ENCODE measurements at regions of chr18 and their contacts with region 1.

Region 1: DNA sequence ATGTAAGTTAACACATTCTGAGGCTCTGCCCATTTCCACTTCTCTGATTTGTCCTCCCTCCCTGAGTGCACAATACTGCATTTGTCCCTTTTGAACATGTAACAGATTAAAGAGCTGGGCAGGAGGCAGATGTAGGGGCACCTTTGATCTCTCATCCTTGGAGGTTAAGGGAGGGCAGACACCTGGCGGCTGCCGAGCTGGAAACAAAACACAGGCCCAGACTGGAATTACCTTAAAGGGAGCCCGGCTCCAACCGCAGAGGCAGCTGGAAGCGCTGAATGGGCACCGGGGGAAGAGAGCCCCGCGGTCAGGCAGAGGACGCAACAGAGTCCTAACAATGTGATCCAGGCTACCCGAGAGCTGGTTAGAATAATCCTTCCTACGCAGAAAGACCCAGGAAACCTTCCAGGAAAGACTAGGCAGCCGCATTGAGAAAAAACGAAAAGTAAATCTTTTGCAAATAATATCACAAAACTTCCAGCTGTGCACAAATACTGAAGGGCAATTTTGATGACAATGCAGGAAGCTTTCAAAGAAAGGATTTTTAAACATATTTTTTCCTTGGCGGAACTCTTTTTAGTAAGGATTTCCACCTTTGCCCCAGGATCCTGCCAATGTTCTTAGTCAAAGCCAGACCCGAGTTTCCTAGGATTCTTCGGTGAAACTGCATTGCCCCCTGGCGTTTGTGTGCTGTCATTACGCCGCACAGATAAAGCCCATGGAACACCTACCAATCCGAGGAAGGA is 216.0 kb downstream of the TGIF1 start:
- DNase-seq: peak; percentile 78 to 86 (median 81)
- H3K4me3 ChIP-seq: peak overlapping the region in 3 of 7 experiments; percentile 30 to 65 (median 38)
- H3K27ac ChIP-seq: peak overlapping the region in 1 of 2 experiments; percentile 67
- H3K4me1 ChIP-seq: peaks cover 10 to 32% (median 27%) of the 10 kb centered on the region in 4 experiments
- H3K27me3 ChIP-seq: no peaks in the 10 kb centered on the region

Region 2: DNA sequence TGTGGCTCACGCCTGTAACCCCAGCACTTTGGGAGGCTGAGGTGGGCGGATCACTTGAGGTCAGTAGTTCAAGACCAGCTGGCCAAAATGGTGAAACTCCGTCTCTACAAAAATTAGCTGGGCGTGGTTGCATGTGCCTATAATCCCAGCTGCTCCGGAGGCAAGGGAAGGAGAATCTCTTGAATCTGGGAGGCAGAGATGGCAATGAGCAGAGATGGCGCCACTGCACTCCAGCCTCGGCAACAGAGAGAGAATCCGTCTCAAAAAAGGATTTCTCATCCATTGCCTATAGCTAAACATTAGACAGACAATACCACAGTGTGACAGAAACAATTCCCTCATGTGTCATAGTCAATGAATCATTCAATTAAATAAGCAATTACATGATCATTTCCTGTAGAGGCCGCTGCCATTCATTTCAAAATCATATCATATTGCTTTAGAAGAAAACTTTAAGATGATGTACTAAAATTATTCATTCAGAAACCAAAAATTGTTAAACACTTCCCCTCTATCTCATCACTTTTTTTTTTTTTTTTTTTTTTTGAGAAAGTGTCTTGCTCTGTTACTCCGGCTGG is 285.5 kb before region 1 on chr18:
- CTCF ChIA-PET with region 1: no interaction called
- POLR2A ChIA-PET with region 1: no interaction called
- DNase-seq: no peak
- H3K4me3 ChIP-seq: no peak overlapping the region
- H3K27ac ChIP-seq: no peak overlapping the region
- H3K4me1 ChIP-seq: no peaks in the 10 kb centered on the region
- H3K27me3 ChIP-seq: no peaks in the 10 kb centered on the region

Region 3: DNA sequence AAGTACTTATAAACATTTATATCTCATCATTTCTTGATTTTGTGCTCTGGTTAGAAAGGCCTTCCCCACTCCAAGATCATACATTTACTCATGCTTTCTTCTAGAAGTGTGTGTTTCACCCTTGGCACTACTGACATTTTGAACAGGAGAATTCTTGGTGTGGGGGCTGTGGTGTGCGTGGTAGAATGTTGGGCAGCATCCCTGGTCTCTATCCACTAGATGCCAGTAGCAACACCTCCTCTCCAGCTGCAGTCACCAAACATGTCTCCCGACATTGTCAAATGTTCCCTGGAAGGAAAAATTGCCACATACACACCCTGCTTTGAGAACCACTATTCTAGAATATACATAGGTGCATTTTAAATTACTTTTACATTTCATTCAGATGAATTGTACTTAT is 224.7 kb before region 1 on chr18:
- CTCF ChIA-PET with region 1: interaction called, 27 read pairs
- POLR2A ChIA-PET with region 1: no interaction called
- DNase-seq: peak; percentile 57 to 62 (median 59)
- H3K4me3 ChIP-seq: peak overlapping the region in 1 of 7 experiments; percentile 5
- H3K27ac ChIP-seq: no peak overlapping the region
- H3K4me1 ChIP-seq: peaks cover under 1 to 12% (median 4%) of the 10 kb centered on the region in 4 experiments
- H3K27me3 ChIP-seq: no peaks in the 10 kb centered on the region

Region 4: GRCh38 chr18:3593904-3594661 is 71.9 kb before region 1 on chr18:
- CTCF ChIA-PET with region 1: interaction called, 72 read pairs
- POLR2A ChIA-PET with region 1: interaction called, 5 read pairs
- DNase-seq: peak; percentile 97 to 98 (median 97)
- H3K4me3 ChIP-seq: peak overlapping the region; percentile 21 to 84 (median 72)
- H3K27ac ChIP-seq: peak overlapping the region; percentile 82 to 92
- H3K4me1 ChIP-seq: peaks cover 26 to 67% (median 53%) of the 10 kb centered on the region in 4 experiments
- H3K27me3 ChIP-seq: no peaks in the 10 kb centered on the region

Region 5: DNA sequence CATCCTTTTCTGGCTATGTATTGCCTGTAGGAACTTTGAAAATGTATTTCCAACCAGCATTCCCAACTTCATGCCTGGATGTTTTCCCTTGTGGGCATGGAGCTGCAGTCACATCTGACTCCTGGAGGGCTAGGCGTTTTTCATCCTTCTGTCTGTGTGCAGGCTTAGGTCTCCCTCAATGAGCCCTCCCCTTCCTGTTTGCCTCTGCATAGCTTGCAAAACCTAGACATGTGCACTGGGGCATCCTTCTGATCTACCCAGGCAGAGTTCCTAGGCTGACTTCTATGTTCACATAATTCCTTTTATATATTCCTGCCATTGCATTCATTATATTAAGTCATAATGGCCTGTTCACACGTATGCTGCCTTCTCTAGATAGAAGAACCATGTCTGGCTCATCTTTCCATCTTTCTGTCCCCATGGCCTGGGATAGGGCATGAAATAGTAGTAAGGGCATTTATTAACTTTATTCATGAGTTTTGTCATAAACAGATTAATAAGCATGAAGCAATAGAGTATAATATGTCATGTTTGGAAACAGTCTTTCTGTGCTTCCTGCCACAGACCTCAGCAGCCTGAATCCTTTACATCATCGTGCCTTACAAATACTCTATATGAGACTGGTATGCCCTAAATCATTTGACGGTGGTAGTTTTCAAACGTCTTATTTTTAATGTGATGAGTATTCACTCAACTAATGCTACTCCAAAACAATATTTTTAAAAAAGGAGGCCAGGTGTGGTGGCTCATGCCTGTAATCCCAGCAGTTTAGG is 20.4 kb before region 1 on chr18:
- CTCF ChIA-PET with region 1: interaction called, 21 read pairs
- POLR2A ChIA-PET with region 1: no interaction called
- DNase-seq: peak in 2 of 3 donors; percentile 35 to 45
- H3K4me3 ChIP-seq: no peak overlapping the region
- H3K27ac ChIP-seq: no peak overlapping the region
- H3K4me1 ChIP-seq: peaks cover 0 to 19% (median 2%) of the 10 kb centered on the region in 4 experiments
- H3K27me3 ChIP-seq: no peaks in the 10 kb centered on the region

Region 6: GRCh38 chr18:3703732-3704176 is 37.8 kb after region 1 on chr18:
- CTCF ChIA-PET with region 1: interaction called, 15 read pairs
- POLR2A ChIA-PET with region 1: no interaction called
- DNase-seq: peak; percentile 60 to 74 (median 67)
- H3K4me3 ChIP-seq: peak overlapping the region in 1 of 7 experiments; percentile 25
- H3K27ac ChIP-seq: no peak overlapping the region
- H3K4me1 ChIP-seq: peaks cover 0 to 19% (median 15%) of the 10 kb centered on the region in 4 experiments
- H3K27me3 ChIP-seq: no peaks in the 10 kb centered on the region

Measured in common myeloid progenitor, CD34-positive (primary cell).